Endothelial cell of umbilical vein (primary cell): ENCODE measurements at regions of chr11 and their contacts with region 1.

Region 1: DNA sequence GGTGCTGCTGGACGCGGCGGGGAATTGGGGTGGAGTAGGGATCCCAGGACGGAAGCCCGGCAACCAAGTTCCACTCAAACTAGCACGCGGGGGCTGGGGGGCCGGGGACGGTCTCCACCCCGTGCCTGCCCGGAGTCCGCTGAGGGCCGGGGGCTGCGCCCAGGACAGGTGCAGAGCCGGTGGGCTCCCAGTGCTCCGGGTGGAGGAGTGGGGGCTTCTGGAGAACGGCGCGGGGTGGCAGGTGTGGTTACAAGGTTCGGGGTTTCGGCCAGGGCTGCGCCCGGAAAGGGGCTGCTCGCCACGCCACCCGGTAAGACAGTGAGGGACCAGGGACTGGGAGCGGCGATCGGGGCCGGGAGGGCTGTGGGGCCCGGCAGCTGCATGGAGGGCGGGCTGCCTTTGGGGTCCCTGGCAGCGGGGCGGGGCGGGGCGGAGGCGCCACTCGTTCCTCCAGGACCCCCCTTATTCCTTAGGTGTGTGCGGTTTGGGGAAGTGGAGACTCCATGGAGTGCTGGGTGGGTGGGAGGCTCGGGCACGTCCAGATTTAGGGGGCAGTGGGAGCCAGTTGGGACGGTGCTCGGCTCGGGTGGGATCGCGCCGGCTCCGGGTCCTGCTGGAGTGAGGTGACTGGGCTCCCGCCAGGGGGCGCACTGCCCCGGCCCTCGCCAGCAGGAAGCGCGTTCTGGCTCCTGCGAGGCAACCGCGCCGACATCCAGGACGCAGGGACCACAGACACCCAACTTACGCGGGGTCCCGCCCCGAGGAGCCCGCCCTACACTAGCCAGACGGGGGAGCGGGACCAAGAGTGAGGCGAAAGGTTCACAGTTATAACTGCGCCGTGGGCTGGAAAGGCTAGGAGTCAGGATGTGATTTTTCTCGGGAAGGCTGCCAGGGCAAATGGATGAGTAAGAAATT is 868 bp downstream of the TSPAN18 start:
- DNase-seq: peak; percentile 82
- H3K4me3 ChIP-seq: peak overlapping the region; percentile 51 to 73 (median 61)
- H3K27ac ChIP-seq: no peak overlapping the region
- H3K4me1 ChIP-seq: peaks cover 35% of the 10 kb centered on the region
- H3K27me3 ChIP-seq: no peaks in the 10 kb centered on the region
- CTCF ChIP-seq: peak; percentile 89 to 97
- POLR2A ChIP-seq: no peak

Region 2: GRCh38 chr11:43830928-43831440 is 896.6 kb before region 1 on chr11:
- CTCF ChIA-PET with region 1: no interaction called
- POLR2A ChIA-PET with region 1: no interaction called
- dilution Hi-C with region 1: no loop called
- intact Hi-C with region 1: no loop called
- DNase-seq: peak; percentile 93
- H3K4me3 ChIP-seq: no peak overlapping the region
- H3K27ac ChIP-seq: peak overlapping the region; percentile 51
- H3K4me1 ChIP-seq: peaks cover 15% of the 10 kb centered on the region
- H3K27me3 ChIP-seq: no peaks in the 10 kb centered on the region
- CTCF ChIP-seq: no peak
- POLR2A ChIP-seq: no peak

Region 3: DNA sequence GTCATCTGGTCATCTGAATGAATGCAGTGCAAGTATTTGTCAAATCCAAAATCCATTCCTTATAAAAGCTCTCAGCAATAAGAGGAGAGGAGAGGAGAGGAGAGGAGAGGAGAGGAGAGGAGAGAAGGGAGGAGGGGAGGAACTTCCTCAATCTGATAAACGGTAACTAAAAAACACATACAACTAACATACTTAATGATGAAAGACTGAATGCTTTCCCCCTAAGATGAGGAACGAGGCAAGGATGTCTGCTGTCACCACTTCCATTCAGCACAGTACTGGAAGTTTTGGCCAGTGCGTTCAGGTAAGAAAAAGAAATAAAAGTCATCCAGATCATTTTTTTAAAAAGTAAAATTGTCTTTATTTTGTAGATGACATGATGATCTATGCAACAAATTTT is 81.8 kb before region 1 on chr11:
- CTCF ChIA-PET with region 1: no interaction called
- POLR2A ChIA-PET with region 1: no interaction called
- dilution Hi-C with region 1: no loop called
- intact Hi-C with region 1: no loop called
- DNase-seq: no peak
- H3K4me3 ChIP-seq: no peak overlapping the region
- H3K27ac ChIP-seq: no peak overlapping the region
- H3K4me1 ChIP-seq: no peaks in the 10 kb centered on the region
- H3K27me3 ChIP-seq: peaks cover 9 to 51% of the 10 kb centered on the region in 2 experiments
- CTCF ChIP-seq: no peak
- POLR2A ChIP-seq: no peak

Region 4: GRCh38 chr11:44658506-44658850 is 69.2 kb before region 1 on chr11:
- CTCF ChIA-PET with region 1: interaction called, 17 read pairs
- POLR2A ChIA-PET with region 1: no interaction called
- dilution Hi-C with region 1: no loop called
- intact Hi-C with region 1: no loop called
- DNase-seq: peak; percentile 55
- H3K4me3 ChIP-seq: no peak overlapping the region
- H3K27ac ChIP-seq: no peak overlapping the region
- H3K4me1 ChIP-seq: no peaks in the 10 kb centered on the region
- H3K27me3 ChIP-seq: peaks cover 0 to 3% of the 10 kb centered on the region in 2 experiments
- CTCF ChIP-seq: peak; percentile 39 to 55
- POLR2A ChIP-seq: no peak

Region 5: GRCh38 chr11:44766112-44766971 is 38.7 kb after region 1 on chr11:
- CTCF ChIA-PET with region 1: interaction called, 4 read pairs
- POLR2A ChIA-PET with region 1: no interaction called
- dilution Hi-C with region 1: no loop called
- intact Hi-C with region 1: loop called (anchors 2 kb)
- DNase-seq: peak; percentile 92
- H3K4me3 ChIP-seq: no peak overlapping the region
- H3K27ac ChIP-seq: peak overlapping the region; percentile 68
- H3K4me1 ChIP-seq: peaks cover 34% of the 10 kb centered on the region
- H3K27me3 ChIP-seq: no peaks in the 10 kb centered on the region
- CTCF ChIP-seq: no peak
- POLR2A ChIP-seq: no peak

Region 6: GRCh38 chr11:44823006-44823405 is 95.4 kb after region 1 on chr11:
- CTCF ChIA-PET with region 1: interaction called, 3 read pairs
- POLR2A ChIA-PET with region 1: no interaction called
- dilution Hi-C with region 1: no loop called
- intact Hi-C with region 1: loop called (anchors 2 kb)
- DNase-seq: no peak
- H3K4me3 ChIP-seq: no peak overlapping the region
- H3K27ac ChIP-seq: no peak overlapping the region
- H3K4me1 ChIP-seq: peaks cover 26% of the 10 kb centered on the region
- H3K27me3 ChIP-seq: no peaks in the 10 kb centered on the region
- CTCF ChIP-seq: peak; percentile 17 to 33
- POLR2A ChIP-seq: no peak

Region 7: DNA sequence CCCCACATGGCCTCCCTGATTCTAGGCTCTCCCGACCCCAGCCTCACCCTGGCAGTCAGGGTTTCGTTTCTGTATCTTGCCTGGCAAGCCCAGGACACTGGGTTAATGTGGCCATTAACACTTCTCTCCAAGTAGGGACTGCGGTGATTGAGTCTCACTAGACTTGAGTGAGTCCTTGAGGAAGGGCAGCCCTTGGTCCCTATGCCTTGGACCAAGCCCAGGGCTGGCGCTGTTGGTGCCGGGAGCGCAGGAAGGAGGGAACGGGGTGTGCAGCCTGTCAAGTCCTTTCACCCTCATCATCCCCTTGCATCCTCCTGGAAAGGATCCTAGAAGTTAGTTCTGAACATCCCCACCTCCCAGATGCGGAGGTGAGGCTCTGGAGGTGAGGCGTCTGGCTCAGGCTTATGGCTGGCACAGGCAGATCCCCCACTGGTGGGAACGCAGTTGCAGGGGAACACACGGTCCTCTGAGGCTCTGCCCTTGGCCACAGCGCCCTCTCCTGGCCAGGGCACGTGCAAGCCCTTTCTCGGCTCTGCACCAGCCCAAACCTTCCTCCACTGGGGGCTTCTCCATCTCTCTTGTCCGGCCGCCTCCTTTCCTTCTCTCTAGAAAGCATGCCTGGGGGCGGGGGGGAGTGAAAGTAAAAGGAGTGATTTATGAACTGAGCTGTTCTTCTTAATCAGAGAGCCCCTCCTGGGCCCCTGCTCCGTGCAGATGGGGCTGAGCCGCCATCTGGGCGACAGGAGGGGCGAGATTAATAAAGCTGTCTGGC is 166.4 kb after region 1 on chr11:
- CTCF ChIA-PET with region 1: interaction called, 7 read pairs
- POLR2A ChIA-PET with region 1: no interaction called
- dilution Hi-C with region 1: no loop called
- intact Hi-C with region 1: loop called (anchors 1 kb)
- DNase-seq: peak; percentile 69
- H3K4me3 ChIP-seq: no peak overlapping the region
- H3K27ac ChIP-seq: no peak overlapping the region
- H3K4me1 ChIP-seq: no peaks in the 10 kb centered on the region
- H3K27me3 ChIP-seq: no peaks in the 10 kb centered on the region
- CTCF ChIP-seq: peak; percentile 83 to 95
- POLR2A ChIP-seq: no peak

Region 8: GRCh38 chr11:45436118-45436517 is 708.5 kb after region 1 on chr11:
- CTCF ChIA-PET with region 1: no interaction called
- POLR2A ChIA-PET with region 1: no interaction called
- dilution Hi-C with region 1: no loop called
- intact Hi-C with region 1: no loop called
- DNase-seq: no peak
- H3K4me3 ChIP-seq: no peak overlapping the region
- H3K27ac ChIP-seq: no peak overlapping the region
- H3K4me1 ChIP-seq: no peaks in the 10 kb centered on the region
- H3K27me3 ChIP-seq: peaks cover 2 to 7% of the 10 kb centered on the region in 2 experiments
- CTCF ChIP-seq: no peak
- POLR2A ChIP-seq: no peak